ENCODE measurements at regions of chr17 and their contacts with region 1.

Region 1: GRCh38 chr17:79991140-79991923 is 44.3 kb downstream of the TBC1D16 start:
- DNase-seq: peak; percentile 92
- ATAC-seq: peak; percentile 77
- H3K4me3 ChIP-seq: peak overlapping the region; percentile 74
- H3K27ac ChIP-seq: no peak overlapping the region
- H3K4me1 ChIP-seq: peaks cover 43% of the 10 kb centered on the region
- H3K27me3 ChIP-seq: no peaks in the 10 kb centered on the region
- CTCF ChIP-seq: peak; percentile 42

Region 2: DNA sequence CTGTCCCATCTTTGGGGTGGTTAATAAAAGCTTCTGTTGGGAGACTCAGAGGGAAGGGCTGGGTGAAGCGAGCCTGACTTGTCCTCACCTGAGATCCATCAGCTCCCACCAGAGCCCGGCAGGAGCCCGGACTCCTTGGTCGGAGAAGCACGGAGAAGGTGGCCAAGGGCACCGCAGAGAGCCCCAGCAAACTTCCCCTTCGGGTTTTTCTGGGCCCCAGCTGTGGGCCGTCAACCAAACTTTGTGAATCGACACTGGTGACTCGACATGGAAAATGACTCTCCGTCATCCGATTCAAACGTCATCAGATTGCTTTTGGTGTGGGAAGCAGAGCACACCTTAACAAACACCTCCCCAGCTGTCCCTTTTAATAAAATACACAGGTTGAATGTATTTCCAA is 239.2 kb before region 1 on chr17:
- CTCF ChIA-PET with region 1: no interaction called
- POLR2A ChIA-PET with region 1: no interaction called
- intact Hi-C with region 1: loop called (anchors 5 kb)
- DNase-seq: peak; percentile 27
- ATAC-seq: no peak
- H3K4me3 ChIP-seq: no peak overlapping the region
- H3K27ac ChIP-seq: peak overlapping the region; percentile 28
- H3K4me1 ChIP-seq: peaks cover 33% of the 10 kb centered on the region
- H3K27me3 ChIP-seq: 0 out of 2 replicates have a peak, but pooled peaks cover 3% of the 10 kb centered on the region
- CTCF ChIP-seq: no peak

Region 3: DNA sequence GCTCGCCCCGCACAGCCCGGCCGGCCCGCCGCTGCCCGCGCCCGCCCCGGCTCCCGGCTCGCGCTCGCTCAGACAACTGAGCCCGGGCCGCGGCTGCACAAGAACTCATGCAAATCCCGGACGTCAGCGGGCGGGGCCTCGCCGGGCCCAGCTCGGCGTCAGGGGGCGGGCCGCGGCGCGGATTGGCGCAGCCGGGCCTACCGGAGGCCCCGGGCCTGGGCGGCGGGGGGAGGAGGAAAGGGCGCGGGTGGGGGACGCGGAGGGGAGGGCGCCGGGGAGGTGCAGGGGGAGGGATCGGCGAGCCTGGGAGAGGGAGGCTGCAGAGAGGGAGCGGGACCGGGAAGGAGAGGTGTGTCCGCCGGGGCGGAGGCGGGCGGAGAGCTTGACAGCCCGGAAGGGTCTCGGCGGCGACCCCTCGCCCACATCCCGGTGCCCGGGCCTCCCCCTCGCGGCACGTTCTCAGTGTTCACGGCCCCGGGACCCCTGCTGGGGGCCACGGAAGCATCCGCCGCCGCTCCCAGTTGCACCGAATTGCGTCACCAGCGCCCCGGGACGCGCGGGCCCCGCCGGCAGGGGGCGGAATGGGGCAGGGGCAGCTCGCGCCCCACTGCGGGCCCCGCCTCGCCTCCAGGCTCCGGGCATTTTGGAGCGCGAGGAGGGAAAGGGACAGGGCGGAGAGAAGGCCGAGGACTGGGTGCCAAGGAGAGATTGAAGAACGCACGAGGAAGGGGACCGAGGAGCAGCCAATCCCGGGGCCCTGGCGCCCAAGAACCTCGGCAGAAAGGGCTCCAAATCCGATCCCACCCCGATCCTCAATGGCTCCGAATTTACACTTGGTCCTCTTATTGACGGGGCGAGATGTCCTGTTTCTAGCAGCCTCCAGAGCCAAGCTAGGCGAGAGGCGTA is 151.7 kb before region 1 on chr17 and contains the start of gene CBX4:
- CTCF ChIA-PET with region 1: interaction called, 9 read pairs
- POLR2A ChIA-PET with region 1: interaction called, 4 read pairs
- intact Hi-C with region 1: loop called (anchors 1 kb)
- DNase-seq: peak; percentile 98
- ATAC-seq: peak; percentile 70
- H3K4me3 ChIP-seq: peak within 1 kb of the TSS; percentile 99
- H3K27ac ChIP-seq: peak within 1 kb of the TSS; percentile 47
- H3K4me1 ChIP-seq: peaks cover 43% of the 10 kb centered on the region
- H3K27me3 ChIP-seq: peaks cover 39% of the 10 kb centered on the region
- CTCF ChIP-seq: peak; percentile 92
- total RNA-seq, gene CBX4: 53.5 and 75.4 TPM in 2 replicates

Region 4: DNA sequence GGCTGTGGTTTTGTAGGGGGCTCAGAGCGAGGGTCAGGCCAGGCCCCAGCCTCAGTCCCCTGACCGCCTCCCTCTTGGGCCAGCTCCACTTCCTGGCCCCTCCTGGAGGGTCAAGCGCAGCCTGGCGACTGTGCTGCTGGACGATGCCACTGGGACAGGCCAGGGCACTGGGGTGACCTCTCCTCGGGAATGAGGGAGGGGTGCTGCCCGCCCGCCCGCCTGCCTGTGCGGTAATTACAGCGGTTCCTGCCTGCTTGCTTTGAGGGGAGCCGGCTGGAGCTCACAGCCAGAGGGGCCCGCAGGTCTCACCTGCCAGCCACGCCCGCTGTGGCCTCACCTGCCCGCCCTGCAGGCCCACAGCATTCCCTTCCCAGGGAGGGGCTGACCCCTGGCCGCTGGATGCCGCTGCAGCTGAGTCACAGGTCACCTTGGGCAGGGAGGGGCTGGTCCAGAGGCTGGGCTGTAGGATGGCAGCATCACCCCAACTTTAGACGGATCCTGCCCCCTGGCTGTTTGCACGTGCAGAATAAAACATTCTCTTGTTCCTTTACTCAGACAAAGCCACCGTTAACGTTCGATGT is 75.4 kb before region 1 on chr17:
- CTCF ChIA-PET with region 1: no interaction called
- POLR2A ChIA-PET with region 1: no interaction called
- intact Hi-C with region 1: loop called (anchors 5 kb)
- DNase-seq: peak; percentile 80
- ATAC-seq: peak; percentile 48
- H3K4me3 ChIP-seq: no peak overlapping the region
- H3K27ac ChIP-seq: no peak overlapping the region
- H3K4me1 ChIP-seq: peaks cover 33% of the 10 kb centered on the region
- H3K27me3 ChIP-seq: no peaks in the 10 kb centered on the region
- CTCF ChIP-seq: peak; percentile 55; the same call in 1 of the 2 replicates

Region 5: GRCh38 chr17:79960788-79961522 is 30.4 kb before region 1 on chr17:
- CTCF ChIA-PET with region 1: no interaction called
- POLR2A ChIA-PET with region 1: no interaction called
- intact Hi-C with region 1: loop called (anchors 1 kb)
- DNase-seq: peak; percentile 94
- ATAC-seq: peak; percentile 95
- H3K4me3 ChIP-seq: peak overlapping the region; percentile 13
- H3K27ac ChIP-seq: peak overlapping the region; percentile 74
- H3K4me1 ChIP-seq: peaks cover 13% of the 10 kb centered on the region
- H3K27me3 ChIP-seq: no peaks in the 10 kb centered on the region
- CTCF ChIP-seq: 0 out of 2 replicates have a peak, but pooled peaks have one; percentile 11

Region 6: DNA sequence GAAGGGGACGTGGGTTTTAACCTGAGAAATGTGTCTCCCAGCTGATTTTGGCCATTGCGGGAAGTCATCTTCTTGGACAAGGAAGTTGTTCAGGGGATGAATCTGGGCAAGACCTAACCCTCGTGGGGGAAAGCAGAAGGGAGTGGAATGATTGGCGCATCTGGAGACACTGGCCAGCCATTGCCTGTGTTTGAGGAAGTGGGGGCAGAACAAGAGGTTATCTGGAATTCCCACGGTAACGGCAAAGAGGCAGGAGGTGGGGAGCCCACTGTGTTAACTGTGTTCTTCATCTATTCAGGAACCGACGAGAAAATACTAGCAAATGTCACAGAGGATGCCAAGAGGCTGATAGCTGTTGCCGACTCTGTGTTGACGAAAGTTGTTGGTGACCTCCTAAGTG is 336.2 kb after region 1 on chr17:
- CTCF ChIA-PET with region 1: no interaction called
- POLR2A ChIA-PET with region 1: no interaction called
- intact Hi-C with region 1: no loop called
- DNase-seq: no peak
- ATAC-seq: no peak
- H3K4me3 ChIP-seq: no peak overlapping the region
- H3K27ac ChIP-seq: no peak overlapping the region
- H3K4me1 ChIP-seq: no peaks in the 10 kb centered on the region
- H3K27me3 ChIP-seq: no peaks in the 10 kb centered on the region
- CTCF ChIP-seq: no peak

Measured in PC-3 (cell line).